K562 (cell line): ENCODE measurements at regions of chr1 and their contacts with region 1.

Region 1: DNA sequence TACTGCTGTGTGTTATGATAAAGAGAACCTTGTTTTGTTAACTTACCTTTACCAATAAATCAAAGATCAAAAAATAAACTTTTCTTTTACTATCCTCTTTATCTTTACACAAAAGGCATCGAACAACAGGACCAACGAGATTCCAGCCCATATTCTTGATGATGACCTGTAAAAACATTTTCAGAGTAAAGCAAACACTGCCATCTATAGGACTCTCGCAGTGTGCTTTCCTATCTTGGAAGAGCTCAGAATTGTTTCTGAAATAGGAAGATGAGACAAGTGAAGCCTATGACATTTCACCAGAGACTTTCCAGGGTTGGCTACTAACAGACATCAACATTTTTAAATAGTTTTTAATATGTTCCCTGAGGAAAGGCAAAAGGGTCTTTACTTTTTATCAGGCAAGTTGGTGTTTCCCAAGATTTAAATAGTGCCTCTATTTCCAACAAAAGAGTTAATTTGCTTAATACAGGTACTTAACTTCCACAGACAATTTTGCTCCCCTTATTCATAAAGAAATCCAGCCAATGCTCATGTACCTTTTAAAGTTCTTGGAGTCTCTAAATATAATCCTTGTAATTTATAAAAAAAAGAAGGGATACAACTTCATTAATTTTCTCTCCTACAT is 7.3 kb downstream of the GLMN start:
- DNase-seq: peak; percentile 22 to 56 (median 30)
- ATAC-seq: peak; percentile 93
- H3K4me3 ChIP-seq: no peak overlapping the region
- H3K27ac ChIP-seq: no peak overlapping the region
- H3K4me1 ChIP-seq: no peaks in the 10 kb centered on the region
- H3K27me3 ChIP-seq: no peaks in the 10 kb centered on the region
- CTCF ChIP-seq: peak; percentile 47 to 82 (median 70); a peak in 5 of 6 replicates
- EP300 ChIP-seq: no peak
- POLR2A ChIP-seq: no peak
- RAD21 ChIP-seq: peak; percentile 80 to 86

Region 2: GRCh38 chr1:91511386-91511785 is 780.1 kb before region 1 on chr1:
- CTCF ChIA-PET with region 1: no interaction called
- POLR2A ChIA-PET with region 1: no interaction called
- in situ Hi-C with region 1: loop called (anchors 5 kb)
- intact Hi-C with region 1: no loop called
- DNase-seq: peak; percentile 15 to 52 (median 32)
- ATAC-seq: peak; percentile 72
- H3K4me3 ChIP-seq: no peak overlapping the region
- H3K27ac ChIP-seq: no peak overlapping the region
- H3K4me1 ChIP-seq: no peaks in the 10 kb centered on the region
- H3K27me3 ChIP-seq: no peaks in the 10 kb centered on the region
- CTCF ChIP-seq: peak; percentile 28 to 69 (median 45); a peak in 4 of 6 replicates
- EP300 ChIP-seq: no peak
- POLR2A ChIP-seq: no peak
- RAD21 ChIP-seq: peak; percentile 70 to 74

Region 3: DNA sequence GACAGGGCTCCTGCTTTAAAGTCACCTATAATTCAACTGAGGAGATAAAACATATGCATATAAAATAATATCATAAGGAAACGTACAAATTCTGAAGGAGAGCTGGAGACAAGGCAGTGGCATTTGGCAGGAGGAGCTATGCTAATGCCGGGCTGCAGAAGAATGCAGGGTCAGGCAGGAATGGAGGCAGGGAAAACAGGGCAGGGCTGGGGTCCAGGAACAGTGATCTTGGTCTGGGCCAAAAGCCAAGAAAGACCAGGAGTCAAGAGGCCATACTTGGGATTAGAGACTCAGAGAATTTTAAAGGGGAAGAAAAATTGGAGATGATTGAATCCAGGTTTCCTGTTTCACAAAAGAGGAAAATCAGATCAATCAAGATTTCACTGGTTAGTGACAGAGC is 362.2 kb before region 1 on chr1:
- CTCF ChIA-PET with region 1: interaction called, 4 read pairs
- POLR2A ChIA-PET with region 1: no interaction called
- in situ Hi-C with region 1: no loop called
- intact Hi-C with region 1: loop called (anchors 5 kb)
- DNase-seq: no peak
- ATAC-seq: no peak
- H3K4me3 ChIP-seq: no peak overlapping the region
- H3K27ac ChIP-seq: no peak overlapping the region
- H3K4me1 ChIP-seq: no peaks in the 10 kb centered on the region
- H3K27me3 ChIP-seq: no peaks in the 10 kb centered on the region
- CTCF ChIP-seq: no peak
- EP300 ChIP-seq: no peak
- POLR2A ChIP-seq: no peak
- RAD21 ChIP-seq: no peak

Region 4: DNA sequence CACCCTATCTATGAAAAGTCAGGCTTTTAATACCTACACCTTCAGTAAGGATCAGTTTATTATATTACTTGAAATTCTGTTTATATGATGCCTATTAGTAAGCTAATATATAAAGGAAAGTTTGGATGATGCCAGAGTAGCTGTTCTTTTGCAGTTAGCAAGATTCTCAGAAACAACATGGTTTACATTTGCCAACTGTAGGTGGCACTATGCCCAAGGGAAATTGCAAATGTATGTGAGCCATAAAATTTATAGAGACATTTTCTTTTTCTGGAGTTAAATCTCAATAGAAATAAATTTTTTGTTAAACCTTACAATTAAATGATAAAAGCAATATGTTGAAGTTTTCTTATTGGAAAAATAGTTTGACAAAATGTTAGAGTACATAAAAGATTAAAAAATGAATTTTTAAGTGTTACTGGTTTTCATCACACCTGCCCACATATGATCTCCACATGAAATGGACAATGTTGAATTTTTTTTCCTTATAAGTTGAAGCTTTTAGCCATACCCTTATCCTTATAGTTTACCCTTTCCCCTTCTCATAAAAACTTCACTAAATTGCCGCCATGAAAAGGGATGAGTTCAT is 293.8 kb before region 1 on chr1:
- CTCF ChIA-PET with region 1: interaction called, 4 read pairs
- POLR2A ChIA-PET with region 1: no interaction called
- in situ Hi-C with region 1: no loop called
- intact Hi-C with region 1: loop called (anchors 2 kb)
- DNase-seq: peak in 1 of 4 experiments; percentile 43
- ATAC-seq: no peak
- H3K4me3 ChIP-seq: no peak overlapping the region
- H3K27ac ChIP-seq: no peak overlapping the region
- H3K4me1 ChIP-seq: no peaks in the 10 kb centered on the region
- H3K27me3 ChIP-seq: peaks cover 2 to 4% of the 10 kb centered on the region in 2 experiments; a peak in 1 of 5 replicates
- CTCF ChIP-seq: peak; percentile 24 to 69 (median 28); a peak in 3 of 6 replicates
- EP300 ChIP-seq: no peak
- POLR2A ChIP-seq: no peak
- RAD21 ChIP-seq: peak; percentile 73 to 83

Region 5: DNA sequence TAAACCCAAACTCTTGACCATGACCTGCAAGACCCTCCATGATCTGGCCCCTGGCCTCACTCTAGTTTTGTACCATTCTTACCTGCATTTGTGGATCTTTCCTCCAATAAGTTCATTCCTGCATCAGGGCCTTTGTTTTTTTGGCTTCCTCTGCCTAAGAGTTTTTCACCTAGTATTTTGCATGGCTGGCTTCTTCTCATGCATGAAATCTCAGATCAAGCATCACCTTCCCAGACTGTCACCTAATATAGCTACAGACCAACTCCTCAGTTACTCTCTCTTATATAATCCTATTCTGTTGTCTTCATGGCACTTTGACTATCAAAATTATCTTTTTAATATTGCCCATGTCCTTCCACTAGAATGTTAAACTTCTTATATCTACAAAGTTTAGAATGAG is 157.2 kb before region 1 on chr1:
- CTCF ChIA-PET with region 1: no interaction called
- POLR2A ChIA-PET with region 1: no interaction called
- in situ Hi-C with region 1: no loop called
- intact Hi-C with region 1: no loop called
- DNase-seq: no peak
- ATAC-seq: no peak
- H3K4me3 ChIP-seq: no peak overlapping the region
- H3K27ac ChIP-seq: no peak overlapping the region
- H3K4me1 ChIP-seq: no peaks in the 10 kb centered on the region
- H3K27me3 ChIP-seq: no peaks in the 10 kb centered on the region
- CTCF ChIP-seq: no peak
- EP300 ChIP-seq: no peak
- POLR2A ChIP-seq: no peak
- RAD21 ChIP-seq: no peak